ENCODE measurements at regions of chr1 and their contacts with region 1.

Region 1: DNA sequence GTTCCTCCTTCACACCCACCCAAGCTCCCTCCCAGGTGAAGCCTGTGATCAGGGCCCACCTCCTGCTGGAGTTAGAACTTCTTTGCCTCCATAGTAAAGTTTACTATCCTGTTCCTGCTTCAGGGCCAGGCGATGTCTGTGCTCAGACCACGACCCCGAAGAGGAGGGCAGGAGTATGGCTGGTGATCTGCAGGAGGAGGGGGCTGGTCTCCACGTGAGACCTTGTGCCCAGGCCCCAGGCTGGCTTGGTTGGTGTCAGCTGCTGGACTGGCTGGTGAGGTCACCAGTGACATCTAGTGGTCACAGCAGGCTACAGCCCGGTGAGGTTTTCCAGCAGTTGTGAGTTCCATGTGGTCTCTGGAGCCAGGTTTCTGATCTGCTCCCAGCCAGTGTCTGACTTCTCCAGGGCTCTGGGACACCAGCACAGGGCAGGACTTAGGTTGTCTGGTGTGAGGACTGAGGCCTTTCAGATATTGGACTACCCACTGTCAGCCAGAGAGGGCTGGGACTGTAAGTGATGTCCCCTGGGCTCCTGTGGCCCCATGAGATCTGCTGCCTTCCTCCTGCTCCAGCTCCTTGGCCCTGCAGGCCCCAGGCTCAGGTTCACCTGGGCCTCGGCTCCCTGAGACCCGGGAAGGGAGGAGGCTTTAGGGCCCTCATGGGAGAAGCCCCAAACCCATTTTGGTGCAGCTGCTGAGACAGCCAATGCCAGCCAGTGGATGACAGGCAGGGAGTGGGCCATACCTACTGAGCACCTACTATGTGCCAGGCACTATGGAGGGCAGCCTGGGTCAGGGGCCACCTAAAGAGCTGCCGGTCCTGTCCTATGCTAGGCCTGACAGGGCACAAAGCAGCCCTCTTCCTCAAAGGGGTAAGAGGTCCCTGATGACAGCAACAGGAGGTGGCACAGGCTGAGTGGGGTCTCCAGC is 6.0 kb upstream of the UBL4B start:
- DNase-seq: peak; percentile 77
- H3K4me3 Mint-ChIP-seq: no peak overlapping the region
- H3K27ac Mint-ChIP-seq: no peak overlapping the region
- H3K4me1 Mint-ChIP-seq: no peaks in the 10 kb centered on the region
- H3K27me3 Mint-ChIP-seq: no peaks in the 10 kb centered on the region

Region 2: DNA sequence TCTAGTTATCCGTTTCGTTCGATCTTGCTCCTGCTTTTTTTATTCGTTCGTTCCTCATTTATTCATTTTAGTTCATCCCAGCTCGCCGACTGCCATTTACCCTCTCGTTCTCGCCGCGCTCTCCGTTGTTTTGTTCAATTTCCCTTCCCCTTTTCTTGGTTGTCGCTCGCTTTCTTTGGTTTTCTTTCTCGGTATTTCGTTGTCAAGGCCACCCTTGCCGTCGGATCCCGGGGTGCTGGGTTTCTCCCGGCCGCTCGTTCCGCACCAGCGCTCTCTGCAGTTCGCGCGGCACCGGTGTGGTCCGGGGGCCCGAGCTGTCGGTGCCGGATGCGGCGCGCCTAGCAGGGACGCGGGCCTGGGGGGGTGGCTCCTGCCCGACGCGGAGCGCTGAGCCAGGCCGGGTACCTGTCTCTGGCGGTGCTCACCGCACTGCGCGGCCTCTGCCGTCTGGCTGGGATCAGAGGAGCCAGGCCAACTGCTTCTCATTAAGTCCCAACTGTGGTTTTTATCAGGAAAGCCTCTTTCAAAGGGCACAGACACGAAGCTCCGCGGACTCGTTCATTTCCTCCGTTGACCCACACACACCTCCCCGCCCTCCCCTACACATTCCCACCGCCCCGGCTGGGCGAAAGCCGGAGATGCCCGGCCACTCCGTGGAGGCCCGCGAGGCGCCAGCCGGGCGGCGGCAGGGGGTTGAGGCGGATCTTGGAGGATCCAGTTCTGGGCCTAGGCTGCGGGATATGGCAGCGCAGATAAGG is 37.5 kb before region 1 on chr1:
- CTCF ChIA-PET with region 1: interaction called, 14 read pairs
- POLR2A ChIA-PET with region 1: no interaction called
- intact Hi-C with region 1: no loop called
- DNase-seq: peak; percentile 32
- H3K4me3 Mint-ChIP-seq: peak overlapping the region; percentile 13
- H3K27ac Mint-ChIP-seq: no peak overlapping the region
- H3K4me1 Mint-ChIP-seq: peaks cover 18% of the 10 kb centered on the region
- H3K27me3 Mint-ChIP-seq: peaks cover 62% of the 10 kb centered on the region

Region 3: DNA sequence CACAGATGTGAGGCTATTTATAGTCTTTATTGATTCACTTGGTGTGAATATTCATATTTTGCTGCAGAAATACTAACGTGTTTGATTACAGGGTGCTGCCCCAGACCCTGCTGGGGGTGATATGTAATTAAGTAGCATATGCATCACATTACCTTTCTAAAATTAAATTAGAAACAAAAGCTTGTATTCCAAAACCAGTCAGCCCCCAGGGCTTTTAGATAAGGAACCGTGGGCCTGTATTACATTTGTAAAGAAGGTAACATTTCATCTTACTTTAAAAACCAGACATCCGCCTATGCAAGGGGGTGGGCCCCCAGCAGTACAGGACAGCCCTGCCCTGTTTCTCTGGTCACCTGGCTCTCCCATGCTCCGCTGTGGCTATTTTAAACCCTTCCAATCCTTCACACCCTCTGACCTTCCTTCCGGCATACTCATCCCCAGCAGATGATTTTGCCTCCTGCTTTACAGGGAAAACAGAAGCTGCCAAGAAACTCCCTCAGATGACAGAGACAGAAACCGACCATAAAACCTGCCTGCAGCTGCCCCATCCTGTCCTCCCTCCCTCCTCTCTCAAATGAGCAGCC is 81.8 kb after region 1 on chr1:
- CTCF ChIA-PET with region 1: no interaction called
- POLR2A ChIA-PET with region 1: no interaction called
- intact Hi-C with region 1: no loop called
- DNase-seq: no peak
- H3K4me3 Mint-ChIP-seq: no peak overlapping the region
- H3K27ac Mint-ChIP-seq: no peak overlapping the region
- H3K4me1 Mint-ChIP-seq: peaks cover 2% of the 10 kb centered on the region
- H3K27me3 Mint-ChIP-seq: peaks cover 7% of the 10 kb centered on the region

Measured in activated CD4-positive, alpha-beta memory T cell treated with anti-CD3 and anti-CD28 coated beads for 36 hours (primary cell).